Thyroid gland (tissue), 4 donors: ENCODE measurements at regions of chr17 and their contacts with region 1.

Region 1: DNA sequence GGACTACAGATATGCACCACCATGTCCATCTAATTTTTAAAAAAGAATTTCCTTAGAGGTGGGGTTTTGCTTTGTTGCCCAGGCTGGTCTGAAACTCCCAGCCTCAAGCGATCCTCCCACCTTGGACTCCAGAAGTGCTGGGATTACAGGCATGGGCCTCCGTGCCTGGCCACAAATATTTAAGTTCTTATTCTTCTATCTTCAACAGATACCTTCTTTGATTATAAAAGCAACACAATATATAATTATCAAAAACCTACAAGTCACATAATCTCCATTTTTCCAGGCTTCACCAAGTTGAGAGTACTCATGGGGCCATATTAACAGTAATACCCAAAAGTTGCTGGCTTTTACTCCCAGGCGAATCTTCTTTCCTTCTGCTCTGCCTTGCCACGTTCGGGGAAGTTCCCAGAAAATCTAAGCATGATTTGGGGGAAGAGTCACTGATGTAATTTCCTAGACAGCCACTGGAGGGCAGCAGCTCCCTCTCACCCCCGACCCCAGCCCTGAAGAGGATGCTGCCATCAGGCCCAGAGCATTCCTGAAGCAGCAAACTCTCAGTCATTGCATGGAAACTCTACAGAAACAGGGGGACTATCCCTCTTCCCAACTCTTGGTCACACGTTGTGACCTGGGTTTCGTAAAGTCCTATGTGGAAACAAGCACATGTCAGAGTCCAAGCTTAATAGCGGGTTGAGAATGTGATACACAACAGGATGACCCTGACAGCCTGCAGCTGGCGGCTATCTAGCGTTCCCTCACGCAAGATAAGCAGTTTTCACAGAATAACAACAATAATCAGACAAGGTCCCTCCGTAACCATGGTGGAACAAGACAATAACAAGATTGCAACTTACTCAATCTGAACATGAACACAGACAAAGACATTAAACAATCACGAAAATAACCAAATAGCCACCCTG is 43.9 kb upstream of the DHX40 start:
- DNase-seq: peak; percentile 56 to 66
- H3K4me3 ChIP-seq: no peak overlapping the region
- H3K27ac ChIP-seq: no peak overlapping the region
- H3K4me1 ChIP-seq: no peaks in the 10 kb centered on the region
- H3K27me3 ChIP-seq: no peaks in the 10 kb centered on the region
- CTCF ChIP-seq: peak; percentile 53 to 94 (median 86)
- POLR2A ChIP-seq: no peak

Region 2: DNA sequence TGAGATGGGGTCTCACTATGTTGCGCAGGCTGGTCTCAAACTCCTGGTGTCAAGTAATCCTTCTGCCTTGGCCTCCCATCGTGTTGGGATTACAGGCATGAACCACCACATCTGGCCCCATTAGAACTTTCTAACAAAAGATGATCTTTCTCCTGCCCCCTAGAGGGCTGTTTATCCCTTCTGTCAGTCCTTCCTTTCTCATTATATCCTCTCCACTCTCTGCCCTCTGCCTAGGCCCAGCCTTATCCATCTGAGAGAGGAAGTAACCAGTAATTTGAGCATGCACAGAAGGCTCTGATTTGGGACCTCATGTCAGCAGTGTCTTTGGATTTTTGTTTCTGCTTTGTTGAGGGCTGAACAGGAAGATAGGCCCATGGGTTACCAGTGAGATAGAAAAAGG is 39.6 kb after region 1 on chr17:
- intact Hi-C with region 1: loop called (anchors 5 kb)
- DNase-seq: no peak
- H3K4me3 ChIP-seq: no peak overlapping the region
- H3K27ac ChIP-seq: no peak overlapping the region
- H3K4me1 ChIP-seq: peaks cover 0 to 6% of the 10 kb centered on the region in 2 donors
- H3K27me3 ChIP-seq: no peaks in the 10 kb centered on the region
- CTCF ChIP-seq: peak in 1 of 6 experiments; percentile 9
- POLR2A ChIP-seq: no peak